MCF 10A (cell line): ENCODE measurements at regions of chr19 and their contacts with region 1.

Region 1: DNA sequence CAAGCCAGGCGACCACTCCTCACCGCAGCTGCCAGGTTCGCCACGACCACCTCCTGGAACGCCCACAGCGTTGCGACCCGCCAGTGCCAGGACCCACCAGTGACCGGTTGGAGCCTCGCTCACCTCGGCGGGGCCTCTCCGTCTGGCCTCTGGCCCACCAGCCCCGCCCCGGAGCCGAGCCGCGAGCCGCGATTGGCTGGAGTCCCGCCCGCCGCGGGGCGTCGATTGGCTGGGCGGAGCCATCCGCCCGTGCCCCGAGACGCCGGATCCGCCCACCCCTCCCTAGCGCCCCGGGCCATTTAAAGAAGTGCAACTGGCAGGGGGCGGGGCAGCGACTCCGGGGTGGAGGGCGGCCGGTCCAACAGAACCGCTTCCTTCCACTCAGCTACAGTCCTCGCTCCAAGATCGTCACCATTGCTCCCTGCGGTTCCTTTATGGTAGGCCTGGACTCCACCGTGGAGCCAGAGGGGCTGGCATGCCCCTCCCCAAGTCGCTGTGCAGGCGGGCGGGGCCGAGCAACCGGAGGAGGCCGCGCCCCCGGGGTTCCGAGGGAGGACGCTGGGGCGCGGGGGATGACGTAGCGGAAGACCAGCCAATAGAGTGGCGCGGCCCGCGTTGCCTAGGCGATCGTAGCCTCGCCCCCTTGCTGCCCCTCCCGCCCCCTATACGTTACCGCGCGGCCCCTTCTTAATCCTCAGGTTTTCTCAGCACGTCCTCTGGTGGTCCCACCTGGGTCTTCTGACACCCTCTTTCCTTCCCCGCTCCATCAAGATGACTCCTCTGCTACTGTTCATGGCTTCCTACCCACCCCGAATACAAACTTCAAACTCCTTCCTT is at the start of gene SERTAD3:
- DNase-seq: peak; percentile 96
- H3K4me3 Mint-ChIP-seq: peak within 1 kb of the TSS; percentile 100
- H3K27ac Mint-ChIP-seq: peak within 1 kb of the TSS; percentile 92
- H3K4me1 Mint-ChIP-seq: peaks cover 22% of the 10 kb centered on the region
- H3K27me3 Mint-ChIP-seq: no peaks in the 10 kb centered on the region
- CTCF ChIP-seq: no peak
- total RNA-seq, gene SERTAD3: 23.3 and 29.4 TPM in 2 replicates

Region 2: GRCh38 chr19:40348125-40348913 is 96.1 kb before region 1 on chr19 and contains the starts of genes C19orf47 and PLD3:
- CTCF ChIA-PET with region 1: interaction called, 4 read pairs
- POLR2A ChIA-PET with region 1: interaction called, 11 read pairs
- intact Hi-C with region 1: no loop called
- DNase-seq: peak; percentile 99
- H3K4me3 Mint-ChIP-seq: peak within 1 kb of the TSS; percentile 99
- H3K27ac Mint-ChIP-seq: peak within 1 kb of the TSS; percentile 95
- H3K4me1 Mint-ChIP-seq: peaks cover 17% of the 10 kb centered on the region
- H3K27me3 Mint-ChIP-seq: no peaks in the 10 kb centered on the region
- CTCF ChIP-seq: no peak
- total RNA-seq, gene C19orf47: 14.9 and 16.1 TPM in 2 replicates
- total RNA-seq, gene PLD3: 98.9 and 130 TPM in 2 replicates

Region 3: DNA sequence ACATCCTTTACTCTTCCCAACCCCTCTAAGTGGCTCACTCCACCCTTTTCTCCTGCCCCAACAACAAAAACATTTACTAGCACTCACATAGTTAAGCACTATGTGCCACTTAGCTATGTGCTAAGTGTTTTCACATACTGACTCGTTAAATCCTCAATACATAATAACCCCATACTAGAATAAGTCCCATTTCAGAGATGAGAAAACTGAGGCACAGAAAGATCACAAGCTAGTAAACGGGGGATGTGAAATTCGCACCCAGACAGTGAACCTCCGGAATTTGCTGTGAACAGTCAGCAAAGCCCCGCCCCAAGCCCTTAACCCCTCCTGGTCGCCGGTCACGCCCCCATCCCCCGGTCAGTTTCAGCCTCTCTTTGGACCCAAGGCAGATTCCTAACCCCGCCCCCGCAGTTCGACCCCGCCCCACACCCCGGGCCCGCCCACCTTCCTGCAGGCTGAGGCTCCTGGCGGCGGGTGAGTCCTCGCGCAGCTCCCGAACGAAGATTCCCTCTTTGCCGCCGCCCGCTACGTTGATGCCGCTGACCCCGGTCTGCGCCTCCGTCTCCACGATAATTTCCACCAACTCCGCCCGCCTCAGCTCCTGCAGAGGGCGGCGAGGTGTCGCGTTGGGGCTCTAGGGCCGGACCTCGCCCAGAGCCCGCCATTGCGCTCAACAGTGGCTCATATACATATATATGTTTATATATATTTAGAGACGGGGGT is 41.0 kb before region 1 on chr19:
- CTCF ChIA-PET with region 1: no interaction called
- POLR2A ChIA-PET with region 1: interaction called, 14 read pairs
- intact Hi-C with region 1: no loop called
- DNase-seq: peak; percentile 92
- H3K4me3 Mint-ChIP-seq: peak overlapping the region; percentile 79
- H3K27ac Mint-ChIP-seq: no peak overlapping the region
- H3K4me1 Mint-ChIP-seq: peaks cover 20% of the 10 kb centered on the region
- H3K27me3 Mint-ChIP-seq: no peaks in the 10 kb centered on the region
- CTCF ChIP-seq: peak; percentile 6

Region 4: GRCh38 chr19:40433391-40434216 is 10.8 kb before region 1 on chr19:
- CTCF ChIA-PET with region 1: no interaction called
- POLR2A ChIA-PET with region 1: interaction called, 59 read pairs
- intact Hi-C with region 1: no loop called
- DNase-seq: peak; percentile 93
- H3K4me3 Mint-ChIP-seq: peak overlapping the region; percentile 78
- H3K27ac Mint-ChIP-seq: peak overlapping the region; percentile 97
- H3K4me1 Mint-ChIP-seq: peaks cover 11% of the 10 kb centered on the region
- H3K27me3 Mint-ChIP-seq: no peaks in the 10 kb centered on the region
- CTCF ChIP-seq: no peak

Region 5: DNA sequence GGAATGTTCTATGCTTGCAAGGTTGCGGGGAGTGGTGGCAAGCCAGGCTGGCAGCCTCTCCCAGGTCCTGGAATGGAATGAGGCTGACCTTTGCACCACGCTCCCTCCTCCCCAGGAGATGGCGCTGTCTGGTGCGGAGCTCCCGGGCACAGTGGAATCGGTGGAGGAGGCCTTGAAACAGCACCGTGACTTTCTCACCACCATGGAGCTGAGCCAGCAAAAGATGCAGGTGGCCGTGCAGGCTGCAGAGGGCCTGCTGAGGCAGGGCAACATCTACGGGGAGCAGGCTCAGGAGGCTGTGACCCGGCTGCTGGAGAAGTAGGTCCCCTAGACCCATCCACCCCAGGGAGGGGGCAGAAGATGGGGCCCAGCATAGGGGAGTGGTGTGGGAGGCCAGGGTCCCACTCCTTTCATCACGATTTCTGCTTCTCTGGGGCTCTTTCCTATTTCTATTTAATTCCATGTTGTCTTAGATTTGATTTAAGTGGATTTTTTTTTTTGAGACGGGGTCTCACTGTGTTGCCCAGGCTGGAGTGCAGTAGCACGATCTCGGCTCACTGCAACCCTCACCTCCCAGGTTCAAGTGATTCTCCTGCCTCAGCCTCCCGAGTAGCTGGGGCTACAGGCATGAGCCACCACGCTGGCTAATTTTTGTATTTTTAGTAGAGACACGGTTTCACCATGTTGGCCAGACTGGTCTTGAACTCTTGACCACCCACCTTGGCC is 79.1 kb after region 1 on chr19:
- CTCF ChIA-PET with region 1: no interaction called
- POLR2A ChIA-PET with region 1: no interaction called
- intact Hi-C with region 1: no loop called
- DNase-seq: peak; percentile 79
- H3K4me3 Mint-ChIP-seq: no peak overlapping the region
- H3K27ac Mint-ChIP-seq: no peak overlapping the region
- H3K4me1 Mint-ChIP-seq: peaks cover 7% of the 10 kb centered on the region
- H3K27me3 Mint-ChIP-seq: peaks cover 15% of the 10 kb centered on the region
- CTCF ChIP-seq: peak; percentile 42

Region 6: DNA sequence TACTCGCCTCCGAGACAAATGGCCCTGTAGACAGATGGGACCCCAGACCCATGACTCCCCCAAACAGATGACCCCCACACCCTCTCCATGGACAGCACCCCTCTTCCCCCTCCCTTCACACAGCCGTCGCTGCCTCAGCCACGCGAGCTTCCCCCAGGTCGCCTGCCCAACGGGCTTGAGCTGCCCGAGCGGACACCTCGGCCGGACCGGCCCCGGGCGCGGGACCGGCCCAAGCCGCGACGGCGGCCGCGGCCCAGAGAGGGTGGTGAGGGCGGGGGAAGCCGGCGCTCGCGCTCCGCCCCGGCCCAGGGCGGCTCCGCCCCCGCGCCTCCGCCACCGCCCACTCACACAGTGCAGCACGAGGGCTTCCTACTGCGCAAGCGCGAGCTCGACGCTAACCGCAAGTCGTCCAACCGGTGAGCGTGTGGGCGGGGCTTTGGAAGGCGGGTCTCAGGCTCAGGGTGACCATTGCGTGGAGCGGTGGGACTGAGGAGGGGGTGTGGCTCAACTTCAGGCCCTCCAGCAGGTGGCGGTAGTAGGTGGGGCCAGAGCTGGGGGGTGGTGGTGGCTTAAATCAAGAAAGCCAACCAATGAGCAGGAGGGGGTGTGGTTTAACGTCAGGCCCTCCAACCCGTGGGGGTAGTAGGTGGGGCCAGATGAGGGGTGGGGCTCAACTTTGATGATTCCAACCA is 126.0 kb after region 1 on chr19:
- CTCF ChIA-PET with region 1: interaction called, 3 read pairs
- POLR2A ChIA-PET with region 1: interaction called, 10 read pairs
- intact Hi-C with region 1: no loop called
- DNase-seq: peak; percentile 100
- H3K4me3 Mint-ChIP-seq: peak overlapping the region; percentile 66
- H3K27ac Mint-ChIP-seq: peak overlapping the region; percentile 39
- H3K4me1 Mint-ChIP-seq: peaks cover 13% of the 10 kb centered on the region
- H3K27me3 Mint-ChIP-seq: no peaks in the 10 kb centered on the region
- CTCF ChIP-seq: peak; percentile 33

Region 7: DNA sequence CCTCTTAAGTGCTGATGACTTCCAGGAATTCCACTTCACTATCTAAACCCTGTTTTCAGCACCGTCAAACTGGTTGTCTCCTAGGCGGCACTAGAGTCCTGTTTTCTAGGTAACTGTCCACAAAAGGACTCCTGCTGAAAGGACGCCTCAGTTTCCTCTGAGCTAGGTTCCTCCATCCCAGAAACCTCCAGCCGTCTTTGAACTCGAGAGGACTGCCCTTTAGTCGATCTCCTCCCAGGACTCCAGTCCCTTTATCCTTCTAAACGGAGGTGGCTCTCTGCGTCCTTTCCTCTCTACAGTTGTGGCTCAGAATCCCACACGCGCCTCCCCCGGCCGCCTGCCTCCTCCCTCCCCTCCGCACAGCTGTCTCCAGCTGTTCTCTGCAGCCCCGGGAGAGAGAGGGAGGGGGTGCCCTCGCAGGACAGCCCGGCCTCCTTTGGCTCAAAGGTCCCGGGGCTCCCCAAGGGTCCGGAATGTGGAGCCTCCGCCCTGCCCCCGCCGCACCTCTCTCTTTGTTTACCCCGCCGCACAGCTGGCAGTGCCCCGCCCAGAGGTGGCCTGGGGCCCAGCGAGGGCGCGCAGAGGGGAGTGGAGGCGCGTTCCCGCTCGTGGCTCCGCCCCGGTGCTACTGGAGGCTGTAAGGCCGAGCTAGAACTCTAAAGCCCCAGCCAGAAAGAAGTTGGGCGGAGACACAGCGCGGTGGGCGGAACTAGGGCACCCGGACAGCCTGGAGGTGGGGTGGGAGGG is 159.2 kb after region 1 on chr19:
- CTCF ChIA-PET with region 1: interaction called, 3 read pairs
- POLR2A ChIA-PET with region 1: interaction called, 25 read pairs
- intact Hi-C with region 1: no loop called
- DNase-seq: peak; percentile 99
- H3K4me3 Mint-ChIP-seq: peak overlapping the region; percentile 79
- H3K27ac Mint-ChIP-seq: peak overlapping the region; percentile 69
- H3K4me1 Mint-ChIP-seq: peaks cover 47% of the 10 kb centered on the region
- H3K27me3 Mint-ChIP-seq: no peaks in the 10 kb centered on the region
- CTCF ChIP-seq: no peak